ENCODE measurements at regions of chr11 and their contacts with region 1.

Region 1: GRCh38 chr11:20127671-20128527 is 32.4 kb downstream of the DBX1 start:
- DNase-seq: peak; percentile 84
- H3K4me3 Mint-ChIP-seq: no peak overlapping the region
- H3K27ac Mint-ChIP-seq: no peak overlapping the region
- H3K4me1 Mint-ChIP-seq: peaks cover 12% of the 10 kb centered on the region
- H3K27me3 Mint-ChIP-seq: peaks cover 12% of the 10 kb centered on the region

Region 2: GRCh38 chr11:19561011-19561410 is 566.9 kb before region 1 on chr11:
- CTCF ChIA-PET with region 1: interaction called, 3 read pairs
- POLR2A ChIA-PET with region 1: no interaction called
- intact Hi-C with region 1: loop called (anchors 5 kb)
- DNase-seq: no peak
- H3K4me3 Mint-ChIP-seq: no peak overlapping the region
- H3K27ac Mint-ChIP-seq: no peak overlapping the region
- H3K4me1 Mint-ChIP-seq: no peaks in the 10 kb centered on the region
- H3K27me3 Mint-ChIP-seq: peaks cover 7% of the 10 kb centered on the region

Region 3: DNA sequence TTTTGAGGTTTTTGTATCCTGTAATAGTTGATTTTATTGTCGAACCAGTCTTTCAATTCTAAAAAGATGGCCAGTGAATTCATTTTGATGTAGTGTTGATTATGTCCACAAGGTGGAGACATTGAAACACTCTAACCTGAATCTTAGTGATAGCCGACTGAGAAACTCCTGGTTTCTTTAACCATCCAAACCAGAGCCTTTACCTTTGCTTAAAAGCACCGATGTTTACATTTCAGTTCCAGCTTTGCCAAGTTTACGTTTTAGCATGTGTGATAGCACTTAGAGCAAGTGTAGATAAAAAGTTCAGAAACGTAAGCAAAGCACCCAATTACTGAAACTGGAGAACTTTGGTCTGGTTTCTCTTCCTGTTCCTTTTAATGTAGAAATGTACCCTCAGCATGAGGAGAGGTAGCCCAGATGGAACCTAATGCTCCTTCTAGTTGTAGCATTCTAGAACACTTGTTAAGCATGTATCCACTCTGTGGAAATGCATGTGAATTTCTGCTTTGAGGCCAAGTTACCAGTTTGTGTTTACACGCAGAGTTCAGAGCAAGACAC is 176.3 kb before region 1 on chr11:
- CTCF ChIA-PET with region 1: interaction called, 38 read pairs
- POLR2A ChIA-PET with region 1: no interaction called
- intact Hi-C with region 1: loop called (anchors 1 kb)
- DNase-seq: no peak
- H3K4me3 Mint-ChIP-seq: peak overlapping the region; percentile 24
- H3K27ac Mint-ChIP-seq: no peak overlapping the region
- H3K4me1 Mint-ChIP-seq: peaks cover 13% of the 10 kb centered on the region
- H3K27me3 Mint-ChIP-seq: peaks cover 12% of the 10 kb centered on the region

Region 4: GRCh38 chr11:20158597-20159257 is 30.8 kb after region 1 on chr11:
- CTCF ChIA-PET with region 1: interaction called, 8 read pairs
- POLR2A ChIA-PET with region 1: no interaction called
- intact Hi-C with region 1: loop called (anchors 2 kb)
- DNase-seq: peak; percentile 42
- H3K4me3 Mint-ChIP-seq: peak overlapping the region; percentile 21
- H3K27ac Mint-ChIP-seq: no peak overlapping the region
- H3K4me1 Mint-ChIP-seq: peaks cover 32% of the 10 kb centered on the region
- H3K27me3 Mint-ChIP-seq: peaks cover 70% of the 10 kb centered on the region

Region 5: DNA sequence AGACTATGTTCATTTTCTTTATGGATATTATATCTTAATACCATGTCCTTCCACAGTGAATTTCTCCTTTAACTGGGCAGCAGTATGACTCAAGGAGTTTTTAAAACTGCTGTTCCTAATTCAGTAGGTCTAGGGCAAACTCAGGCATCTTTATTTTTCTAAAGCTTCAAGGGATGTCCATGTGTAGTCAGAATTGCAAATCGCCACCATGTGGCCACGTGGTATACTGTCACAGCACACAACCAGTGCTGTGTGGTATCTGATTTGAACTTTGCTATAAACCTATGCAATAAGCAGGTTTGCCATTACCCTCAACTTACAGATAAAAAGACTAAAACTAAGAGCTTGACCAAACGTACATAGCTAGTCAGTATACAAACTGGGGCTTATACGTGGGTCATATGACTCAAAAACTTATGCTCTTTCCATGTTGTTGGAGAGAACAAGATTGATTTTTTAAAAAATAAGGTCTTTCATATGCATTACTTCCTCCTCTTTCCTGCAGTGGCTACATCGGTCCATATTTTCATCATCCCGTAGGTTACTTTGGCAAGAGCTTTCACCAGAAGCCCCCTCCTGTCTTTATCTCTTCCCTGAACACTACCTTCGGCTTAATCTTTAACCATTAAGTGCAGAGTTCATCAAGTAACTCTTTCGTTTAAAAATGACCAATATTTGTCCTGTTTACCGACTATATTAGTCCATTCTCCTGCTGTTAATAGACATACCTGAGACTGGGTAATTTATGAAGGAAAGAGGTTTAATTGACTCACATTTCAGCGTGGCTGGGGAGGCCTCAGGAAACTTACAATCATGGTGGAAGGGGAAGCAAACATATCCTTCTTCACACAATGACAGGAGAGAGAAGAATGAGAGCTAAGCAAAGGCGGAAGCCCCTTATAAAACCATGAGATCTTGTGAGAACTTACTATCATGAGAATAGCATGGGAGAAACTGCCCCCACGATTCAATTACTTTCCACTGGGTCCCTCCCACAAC is 227.6 kb after region 1 on chr11:
- CTCF ChIA-PET with region 1: interaction called, 173 read pairs
- POLR2A ChIA-PET with region 1: interaction called, 4 read pairs
- intact Hi-C with region 1: loop called (anchors 1 kb)
- DNase-seq: peak; percentile 58
- H3K4me3 Mint-ChIP-seq: no peak overlapping the region
- H3K27ac Mint-ChIP-seq: no peak overlapping the region
- H3K4me1 Mint-ChIP-seq: peaks cover 10% of the 10 kb centered on the region
- H3K27me3 Mint-ChIP-seq: no peaks in the 10 kb centered on the region

Region 6: DNA sequence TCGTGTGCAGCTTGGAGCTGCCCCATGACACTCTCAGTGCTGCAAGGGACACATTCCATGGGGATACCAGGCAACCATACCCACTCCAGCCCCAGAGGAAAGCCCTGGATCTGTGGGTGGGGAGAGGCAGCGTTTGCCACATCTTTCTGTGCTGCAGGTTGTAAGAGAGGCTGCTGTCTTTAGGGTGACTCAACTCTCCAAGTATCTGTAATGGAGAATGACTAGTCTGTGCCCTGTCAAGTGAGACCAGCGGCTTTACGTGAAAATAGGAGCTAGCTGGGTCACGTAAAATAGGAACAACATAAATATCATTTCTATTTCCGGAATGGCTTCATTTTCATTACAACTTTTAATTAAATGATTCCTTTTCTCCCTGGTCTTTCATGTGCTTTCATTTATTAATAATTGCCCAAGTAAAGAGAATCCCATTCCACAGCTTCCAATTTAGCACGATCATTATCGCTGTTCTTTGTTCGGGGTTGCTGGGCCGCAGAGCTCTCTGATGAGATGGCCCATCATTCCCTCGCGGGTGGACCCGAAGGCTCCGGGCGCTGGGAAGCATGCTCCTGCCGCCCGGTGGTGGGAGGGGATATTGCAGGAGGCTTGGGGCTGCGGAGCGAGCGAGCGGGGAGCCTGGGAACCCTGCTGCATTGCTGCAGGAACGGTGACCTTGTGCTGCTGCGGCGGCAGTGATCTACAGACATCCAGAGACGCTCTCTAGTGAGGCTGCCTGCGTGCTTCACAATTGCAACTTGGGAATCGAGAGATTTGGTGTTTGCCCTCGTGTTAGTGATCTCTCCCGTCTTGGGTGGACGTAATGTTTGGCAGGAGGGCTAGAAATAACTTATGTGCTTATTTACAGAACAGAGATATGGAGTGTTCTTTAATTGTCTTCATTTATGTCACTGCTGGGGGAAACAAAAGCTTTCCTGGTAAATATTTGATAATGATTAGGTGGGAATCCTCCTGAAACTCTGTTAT is 482.1 kb after region 1 on chr11:
- CTCF ChIA-PET with region 1: interaction called, 22 read pairs
- POLR2A ChIA-PET with region 1: no interaction called
- intact Hi-C with region 1: loop called (anchors 1 kb)
- DNase-seq: peak; percentile 76
- H3K4me3 Mint-ChIP-seq: peak overlapping the region; percentile 40
- H3K27ac Mint-ChIP-seq: no peak overlapping the region
- H3K4me1 Mint-ChIP-seq: peaks cover 7% of the 10 kb centered on the region
- H3K27me3 Mint-ChIP-seq: peaks cover 67% of the 10 kb centered on the region

Measured in activated CD4-positive, alpha-beta memory T cell treated with anti-CD3 and anti-CD28 coated beads for 36 hours (primary cell).